Kidney (tissue), 22 donors: ENCODE measurements at regions of chr17 and their contacts with region 1.

Region 1: DNA sequence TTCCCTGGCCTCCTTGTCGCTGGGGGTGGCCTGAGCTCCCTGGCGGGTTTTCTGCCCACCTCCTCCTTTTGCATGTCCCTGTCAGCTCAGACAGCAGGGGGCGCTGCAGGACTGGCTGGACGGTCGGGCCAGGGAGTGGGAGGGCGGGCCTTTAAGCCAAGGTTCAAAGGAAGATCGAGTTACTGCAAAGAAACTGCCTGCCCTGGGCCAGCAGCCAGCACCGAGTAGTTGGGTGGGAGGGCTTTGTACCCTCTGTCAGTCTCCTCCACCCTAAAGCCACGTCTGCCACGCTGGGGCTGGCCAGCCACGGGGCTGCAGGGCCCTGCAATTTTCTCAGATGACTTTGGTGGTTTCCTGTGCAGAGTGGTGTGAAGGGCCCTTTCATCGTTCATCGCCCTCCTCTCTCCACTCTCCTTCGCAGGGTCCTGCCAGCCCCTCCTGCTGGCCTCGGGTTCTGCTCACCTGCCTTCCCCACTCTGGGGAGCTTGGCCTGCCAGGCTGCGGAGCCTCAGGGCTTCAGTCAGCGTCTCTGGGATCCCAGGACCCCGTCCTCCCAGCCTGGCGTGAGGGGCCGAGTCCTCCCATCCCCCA is 12.3 kb downstream of the GPR142 start:
- DNase-seq: peak; percentile 95 to 96 (median 96)
- H3K4me3 ChIP-seq: no peak overlapping the region
- H3K27ac ChIP-seq: no peak overlapping the region
- H3K4me1 ChIP-seq: peaks cover 0 to 13% (median 0%) of the 10 kb centered on the region in 3 donors
- H3K27me3 ChIP-seq: no peaks in the 10 kb centered on the region
- CTCF ChIP-seq: peak; percentile 100

Region 2: GRCh38 chr17:74457146-74457819 is 77.7 kb after region 1 on chr17:
- intact Hi-C with region 1: loop called (anchors 5 kb)
- DNase-seq: peak in 4 of 5 donors; percentile 78 to 88 (median 83)
- H3K4me3 ChIP-seq: no peak overlapping the region
- H3K27ac ChIP-seq: no peak overlapping the region
- H3K4me1 ChIP-seq: peaks cover 0 to 28% (median 12%) of the 10 kb centered on the region in 3 donors
- H3K27me3 ChIP-seq: no peaks in the 10 kb centered on the region
- CTCF ChIP-seq: peak; percentile 99